Astrocyte of the cerebellum (primary cell): ENCODE measurements at regions of chr13 and their contacts with region 1.

Region 1: GRCh38 chr13:20073775-20074174 is 87.1 kb downstream of the GJA3 start:
- DNase-seq: no peak
- H3K4me3 ChIP-seq: no peak overlapping the region
- CTCF ChIP-seq: no peak

Region 2: GRCh38 chr13:20019043-20019442 is 54.7 kb before region 1 on chr13:
- in situ Hi-C with region 1: no loop called
- DNase-seq: no peak
- H3K4me3 ChIP-seq: no peak overlapping the region
- CTCF ChIP-seq: no peak

Region 3: DNA sequence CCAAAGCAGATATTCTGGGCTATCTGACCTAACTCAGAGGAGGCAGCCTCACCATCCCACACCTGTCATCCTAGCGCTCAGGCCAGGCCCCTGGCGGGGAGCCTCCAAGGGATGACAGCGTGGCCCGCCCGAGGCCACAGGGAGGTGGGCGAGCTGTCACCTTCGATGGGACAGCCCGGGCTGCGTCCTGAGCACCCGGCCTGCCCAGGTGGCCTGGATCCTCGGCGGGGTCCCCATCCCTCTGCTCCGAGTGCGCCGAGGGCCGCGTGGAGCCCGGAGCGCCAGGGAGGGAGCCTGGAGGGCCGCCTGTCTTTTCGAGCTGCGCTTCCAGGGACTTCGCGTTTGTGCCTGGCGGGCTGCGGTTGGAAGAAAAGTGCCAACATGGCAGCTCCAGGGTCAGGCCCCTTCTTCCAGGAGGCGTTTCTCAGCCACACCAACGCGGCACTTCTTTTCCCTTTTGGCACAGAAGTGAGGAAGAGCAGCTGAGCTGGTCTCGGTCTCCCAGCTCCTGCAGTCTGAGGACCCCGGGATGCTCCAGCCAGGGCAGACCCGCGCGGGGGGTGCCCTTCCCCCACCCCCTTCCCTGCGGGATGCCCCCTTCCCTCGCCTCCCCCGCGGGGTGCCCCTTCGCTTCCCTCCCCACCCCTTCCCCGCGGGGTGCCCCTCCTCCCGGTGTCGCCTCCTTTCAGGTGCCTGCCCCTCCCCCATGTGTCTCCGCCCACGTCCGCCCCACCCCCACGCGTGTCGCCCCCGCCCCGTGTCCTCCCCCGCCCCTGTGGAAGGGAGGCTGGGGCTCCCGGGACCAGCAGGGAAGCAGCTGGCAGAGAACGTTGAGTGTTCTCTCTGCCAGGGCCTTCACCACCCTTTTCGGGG is 44.7 kb after region 1 on chr13:
- in situ Hi-C with region 1: no loop called
- DNase-seq: no peak
- H3K4me3 ChIP-seq: peak overlapping the region; percentile 44
- CTCF ChIP-seq: no peak

Region 4: DNA sequence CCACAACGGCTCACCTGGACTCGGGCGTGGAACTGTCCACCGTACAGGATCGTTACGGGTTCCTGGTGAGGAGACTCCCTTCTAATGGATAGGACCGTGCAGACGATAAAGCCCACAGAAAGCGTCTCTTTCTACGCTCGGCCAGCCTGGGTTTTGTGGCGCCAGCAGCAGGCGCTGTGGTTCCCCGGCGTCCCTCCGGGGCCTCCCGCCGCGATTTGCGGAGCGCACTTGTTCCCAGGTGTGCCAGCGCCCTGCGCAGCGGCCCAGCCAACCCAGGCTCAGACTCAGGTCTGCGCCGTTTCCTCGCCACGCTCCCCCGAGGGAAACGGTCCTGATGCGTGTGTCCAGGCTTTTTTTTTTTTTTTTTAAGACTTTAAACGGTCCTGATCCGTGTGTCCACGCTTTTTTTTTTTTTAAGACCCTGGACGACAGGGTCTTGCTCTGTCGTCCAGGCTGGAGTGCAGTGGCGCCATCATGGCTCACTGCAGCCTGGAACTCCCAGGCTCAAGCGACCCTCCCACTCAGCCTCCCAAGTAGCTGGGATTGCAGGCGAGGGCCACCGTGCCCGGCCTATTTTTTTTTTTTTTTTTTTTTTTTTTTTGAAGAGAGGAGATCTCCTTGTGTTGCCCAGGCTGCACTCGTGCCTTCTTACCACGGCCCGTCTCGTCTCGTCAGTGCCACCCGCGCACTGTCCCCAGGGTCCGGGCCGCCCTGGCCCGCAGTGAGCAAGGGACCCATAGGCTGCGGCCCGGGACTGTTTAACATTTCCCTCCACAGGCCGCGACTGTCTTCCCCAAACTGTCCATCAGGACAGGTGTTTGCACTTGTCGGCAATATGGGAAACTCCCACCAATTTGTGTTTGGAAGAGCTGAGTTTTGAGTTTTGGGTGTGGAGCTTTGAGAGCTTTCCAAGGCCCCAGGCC is 63.3 kb after region 1 on chr13:
- in situ Hi-C with region 1: loop called (anchors 5 kb)
- DNase-seq: no peak
- H3K4me3 ChIP-seq: no peak overlapping the region
- CTCF ChIP-seq: peak; percentile 32